OCI-LY7 (cell line): ENCODE measurements at regions of chr7 and their contacts with region 1.

Region 1: DNA sequence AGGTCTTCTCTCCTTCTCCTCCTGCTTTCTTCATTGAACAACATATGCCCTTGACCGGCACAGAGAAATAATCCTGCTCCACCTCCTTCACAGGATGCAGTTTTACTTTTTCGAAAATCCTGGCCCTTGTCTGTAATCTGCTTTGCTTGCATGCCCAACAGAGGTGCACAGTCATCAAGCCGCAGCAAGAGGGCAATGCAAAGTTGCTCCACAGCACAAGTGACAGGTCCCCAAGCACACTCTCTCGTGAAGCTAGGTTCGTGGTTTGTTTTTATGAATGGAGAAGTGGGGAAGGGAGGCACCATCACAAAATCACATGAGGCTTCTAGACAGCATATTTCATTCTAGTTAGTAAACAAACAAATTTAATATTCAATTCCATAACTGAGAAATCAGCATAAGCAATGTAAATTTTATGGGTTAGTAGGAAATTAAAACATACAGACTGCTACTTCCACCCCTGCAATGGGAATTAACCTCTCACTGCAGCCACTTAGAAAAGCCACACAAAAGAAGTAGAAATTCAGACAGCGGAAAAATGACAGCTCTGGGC is 178.8 kb downstream of the TPK1 start:
- DNase-seq: no peak
- H3K4me3 ChIP-seq: no peak overlapping the region
- H3K27ac ChIP-seq: no peak overlapping the region
- H3K4me1 ChIP-seq: no peaks in the 10 kb centered on the region
- CTCF ChIP-seq: no peak

Region 2: DNA sequence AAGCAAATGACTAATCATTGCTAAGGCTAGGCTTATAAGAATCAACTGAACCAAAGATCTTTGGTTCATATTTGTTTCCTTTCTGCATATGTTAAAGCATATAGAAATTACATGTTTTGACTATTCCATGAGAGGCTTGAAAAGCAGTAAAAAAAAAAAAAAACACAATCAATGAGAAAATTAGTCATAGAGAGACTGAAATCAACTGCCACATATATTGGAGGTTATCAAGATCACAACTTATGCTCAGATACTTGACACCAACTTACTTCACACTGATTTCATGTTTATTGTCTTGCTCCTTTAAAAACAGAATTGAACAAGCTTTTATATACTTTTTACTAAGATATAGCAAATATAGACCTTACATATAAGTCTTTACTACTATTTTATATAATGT is 17.5 kb after region 1 on chr7:
- CTCF ChIA-PET with region 1: no interaction called
- POLR2A ChIA-PET with region 1: interaction called, 10 read pairs
- intact Hi-C with region 1: no loop called
- DNase-seq: no peak
- H3K4me3 ChIP-seq: no peak overlapping the region
- H3K27ac ChIP-seq: no peak overlapping the region
- H3K4me1 ChIP-seq: no peaks in the 10 kb centered on the region
- CTCF ChIP-seq: no peak

Region 3: GRCh38 chr7:144713850-144714249 is 56.8 kb after region 1 on chr7:
- CTCF ChIA-PET with region 1: no interaction called
- POLR2A ChIA-PET with region 1: no interaction called
- intact Hi-C with region 1: loop called (anchors 5 kb)
- DNase-seq: no peak
- H3K4me3 ChIP-seq: no peak overlapping the region
- H3K27ac ChIP-seq: no peak overlapping the region
- H3K4me1 ChIP-seq: no peaks in the 10 kb centered on the region
- CTCF ChIP-seq: no peak